WTC11 (cell line): ENCODE measurements at regions of chr18 and their contacts with region 1.

Region 1: DNA sequence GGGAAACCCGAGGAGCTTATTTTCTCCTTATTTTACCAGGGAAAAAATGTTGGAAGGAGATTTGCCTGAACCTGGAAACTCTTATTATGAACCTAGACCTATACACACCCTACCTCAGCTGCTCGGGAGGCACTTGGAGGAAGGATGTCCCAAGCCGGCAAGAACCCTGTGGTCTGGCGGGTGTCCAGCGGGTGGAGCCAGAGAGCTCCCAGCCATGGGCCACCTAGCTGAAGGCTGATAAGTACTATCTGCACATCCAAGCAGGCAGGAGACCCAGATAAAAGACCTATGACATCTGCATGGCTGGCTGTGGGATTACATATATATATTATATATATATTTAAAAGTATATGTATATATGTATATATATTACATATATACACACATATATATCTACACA is 1.1 kb upstream of the SLC14A1 start:
- DNase-seq: peak; percentile 91
- ATAC-seq: peak; percentile 99
- H3K4me3 Mint-ChIP-seq: no peak overlapping the region
- H3K27ac Mint-ChIP-seq: no peak overlapping the region
- H3K4me1 Mint-ChIP-seq: peaks cover 20% of the 10 kb centered on the region
- H3K27me3 Mint-ChIP-seq: no peaks in the 10 kb centered on the region; the same call in 1 of the 2 replicates
- CTCF ChIP-seq: peak; percentile 71

Region 2: DNA sequence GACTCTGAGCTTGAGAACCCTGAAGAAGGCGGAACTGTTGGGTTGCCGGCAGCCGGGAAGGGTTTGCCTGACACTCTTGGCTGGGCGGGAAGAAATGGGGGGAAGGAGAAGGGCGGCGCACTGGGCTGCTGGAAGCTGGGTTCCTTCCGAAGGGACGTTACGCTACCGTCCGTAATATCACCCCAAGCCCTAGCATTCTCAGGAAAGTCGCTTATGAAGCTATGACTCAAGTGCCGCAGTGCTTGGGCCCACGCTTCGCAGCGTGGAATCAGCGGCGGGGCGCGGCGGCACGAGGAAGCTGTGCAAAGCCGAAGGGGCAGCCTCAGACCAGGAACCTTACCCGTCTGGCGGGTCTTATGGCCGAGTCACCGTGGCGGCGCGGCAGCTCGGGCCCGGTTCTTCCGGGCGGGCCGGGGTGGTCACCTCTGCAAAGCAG is 52.4 kb after region 1 on chr18:
- CTCF ChIA-PET with region 1: interaction called, 11 read pairs
- POLR2A ChIA-PET with region 1: no interaction called
- DNase-seq: peak; percentile 62
- ATAC-seq: peak; percentile 92
- H3K4me3 Mint-ChIP-seq: peak overlapping the region; percentile 75
- H3K27ac Mint-ChIP-seq: peak overlapping the region; percentile 41; the same call in 1 of the 2 replicates
- H3K4me1 Mint-ChIP-seq: peaks cover 4% of the 10 kb centered on the region
- H3K27me3 Mint-ChIP-seq: peaks cover 45% of the 10 kb centered on the region
- CTCF ChIP-seq: no peak

Region 3: GRCh38 chr18:45793306-45793965 is 70.5 kb after region 1 on chr18:
- CTCF ChIA-PET with region 1: no interaction called
- POLR2A ChIA-PET with region 1: no interaction called
- DNase-seq: no peak
- ATAC-seq: no peak
- H3K4me3 Mint-ChIP-seq: no peak overlapping the region
- H3K27ac Mint-ChIP-seq: peak overlapping the region; percentile 87
- H3K4me1 Mint-ChIP-seq: peaks cover 14% of the 10 kb centered on the region
- H3K27me3 Mint-ChIP-seq: peaks cover 1% of the 10 kb centered on the region; the same call in 1 of the 2 replicates
- CTCF ChIP-seq: no peak

Region 4: GRCh38 chr18:45828917-45829811 is 106.3 kb after region 1 on chr18:
- CTCF ChIA-PET with region 1: interaction called, 15 read pairs
- POLR2A ChIA-PET with region 1: no interaction called
- DNase-seq: no peak
- ATAC-seq: peak; percentile 65
- H3K4me3 Mint-ChIP-seq: no peak overlapping the region
- H3K27ac Mint-ChIP-seq: no peak overlapping the region; the same call in 1 of the 2 replicates
- H3K4me1 Mint-ChIP-seq: peaks cover 30% of the 10 kb centered on the region
- H3K27me3 Mint-ChIP-seq: no peaks in the 10 kb centered on the region; the same call in 1 of the 2 replicates
- CTCF ChIP-seq: no peak

Region 5: DNA sequence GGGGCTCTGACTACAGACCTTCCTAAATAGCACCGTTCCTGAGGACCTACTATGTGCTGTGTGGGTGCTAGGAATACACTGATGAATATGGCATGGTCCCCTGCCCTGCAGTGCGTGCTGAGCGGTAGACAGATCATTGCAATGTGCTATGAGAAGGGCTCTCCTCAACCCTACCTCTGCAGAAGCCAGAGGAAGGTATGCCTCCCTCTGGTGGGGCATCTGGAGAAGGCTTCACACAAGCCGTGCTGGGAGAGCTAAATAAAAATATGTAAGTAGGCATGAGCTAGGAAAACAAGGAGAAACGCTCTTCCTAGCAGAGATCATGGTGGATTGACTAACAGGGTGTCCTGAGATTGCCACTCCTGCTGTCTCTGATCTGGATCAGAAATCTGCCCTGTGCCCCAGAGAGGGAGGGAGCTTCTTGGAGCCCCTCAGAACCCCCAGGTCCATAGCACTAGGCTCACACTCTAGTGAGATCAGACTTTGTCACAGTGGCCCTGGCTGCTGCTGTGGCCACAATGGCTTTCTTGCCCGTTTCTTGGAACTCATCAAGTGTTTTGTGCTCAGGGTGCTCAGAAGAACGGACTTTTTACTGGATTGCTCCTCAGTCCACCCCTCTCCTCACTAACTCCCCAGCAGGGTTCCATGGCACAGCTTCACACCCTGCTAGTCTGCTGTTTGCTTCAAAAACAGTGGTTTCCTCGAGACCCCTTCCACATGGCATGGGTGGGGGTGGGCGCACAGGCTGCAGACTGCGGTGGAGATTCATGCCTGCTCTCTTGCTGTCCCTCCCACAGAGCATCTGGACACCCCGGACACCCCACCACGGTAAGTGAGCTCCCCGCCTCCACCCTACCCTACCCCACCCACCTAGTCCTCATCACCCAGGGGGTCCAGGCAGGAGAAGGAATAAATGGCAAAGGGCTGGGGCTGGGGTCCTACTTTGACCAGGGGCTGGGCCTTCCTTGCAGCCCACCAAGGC is 116.8 kb after region 1 on chr18:
- CTCF ChIA-PET with region 1: interaction called, 25 read pairs
- POLR2A ChIA-PET with region 1: no interaction called
- DNase-seq: peak; percentile 56
- ATAC-seq: peak; percentile 65
- H3K4me3 Mint-ChIP-seq: no peak overlapping the region
- H3K27ac Mint-ChIP-seq: no peak overlapping the region
- H3K4me1 Mint-ChIP-seq: peaks cover 22% of the 10 kb centered on the region
- H3K27me3 Mint-ChIP-seq: peaks cover 44% of the 10 kb centered on the region
- CTCF ChIP-seq: peak; percentile 40; the same call in 1 of the 2 replicates

Region 6: DNA sequence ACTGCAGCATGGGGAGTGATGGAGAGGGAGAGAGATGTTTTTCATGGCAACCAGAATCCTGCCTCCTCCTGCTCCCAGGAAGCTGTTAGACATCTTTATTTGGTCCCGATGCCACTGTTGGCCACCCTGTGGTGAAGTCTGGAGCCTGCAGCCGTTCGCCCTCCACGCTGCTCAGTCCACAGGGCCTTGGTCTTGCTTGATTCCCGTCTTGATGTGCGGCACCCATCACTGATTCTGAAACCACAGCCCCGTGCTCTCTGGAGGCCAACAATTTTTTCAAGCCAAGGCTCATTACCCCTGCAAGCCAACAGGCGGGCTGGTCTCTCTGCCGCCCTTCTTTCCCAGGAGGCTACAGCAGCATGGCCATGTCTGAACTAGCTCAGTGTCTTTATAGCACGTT is 127.1 kb after region 1 on chr18:
- CTCF ChIA-PET with region 1: interaction called, 16 read pairs
- POLR2A ChIA-PET with region 1: no interaction called
- DNase-seq: peak; percentile 66
- ATAC-seq: peak; percentile 83
- H3K4me3 Mint-ChIP-seq: no peak overlapping the region
- H3K27ac Mint-ChIP-seq: no peak overlapping the region
- H3K4me1 Mint-ChIP-seq: 0 out of 2 replicates have a peak, but pooled peaks cover 5% of the 10 kb centered on the region
- H3K27me3 Mint-ChIP-seq: no peaks in the 10 kb centered on the region
- CTCF ChIP-seq: peak; percentile 20; the same call in 1 of the 2 replicates